ENCODE measurements at regions of chr3 and their contacts with region 1.

Region 1: GRCh38 chr3:48439820-48440589 is at the starts of genes CCDC51 and TMA7:
- DNase-seq: peak; percentile 96 to 99 (median 97)
- H3K4me3 ChIP-seq: peak within 1 kb of the TSS; percentile 93 to 95
- H3K4me3 Mint-ChIP-seq: peak within 1 kb of the TSS; percentile 86 to 99 (median 93)
- H3K27ac ChIP-seq: peak within 1 kb of the TSS; percentile 86
- H3K27ac Mint-ChIP-seq: peak within 1 kb of the TSS; percentile 91 to 100 (median 99)
- H3K4me1 ChIP-seq: peaks cover 32% of the 10 kb centered on the region
- H3K4me1 Mint-ChIP-seq: peaks cover 16 to 40% (median 32%) of the 10 kb centered on the region in 4 donors
- H3K27me3 ChIP-seq: no peaks in the 10 kb centered on the region
- H3K27me3 Mint-ChIP-seq: no peaks in the 10 kb centered on the region
- total RNA-seq, gene CCDC51: 5.1 to 5.4 TPM
- total RNA-seq, gene TMA7: 309 to 310 TPM

Region 2: DNA sequence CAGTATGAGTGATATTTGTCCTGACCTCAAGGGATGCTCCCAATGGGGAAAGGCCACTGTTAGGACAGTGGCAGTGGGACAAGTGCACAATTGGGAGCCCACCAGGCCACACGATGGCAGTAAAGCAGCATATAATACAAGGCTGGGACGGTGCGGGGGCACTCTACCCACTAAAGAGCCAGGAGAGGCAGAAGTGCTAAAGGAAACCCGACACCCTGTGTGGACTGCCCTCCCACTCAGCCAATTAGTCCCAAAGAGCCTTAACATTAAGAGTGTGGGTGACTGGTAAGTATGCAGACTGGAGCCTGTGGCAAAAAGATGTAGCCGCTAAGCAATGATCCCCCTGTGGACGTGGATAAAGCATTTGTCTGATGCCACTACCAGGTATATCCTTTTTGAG is 207.3 kb before region 1 on chr3:
- CTCF ChIA-PET with region 1: interaction called, 35 read pairs
- POLR2A ChIA-PET with region 1: no interaction called
- intact Hi-C with region 1: loop called (anchors 1 kb)
- DNase-seq: peak in 4 of 5 donors; percentile 22 to 42 (median 32)
- H3K4me3 ChIP-seq: no peak overlapping the region
- H3K4me3 Mint-ChIP-seq: no peak overlapping the region
- H3K27ac ChIP-seq: no peak overlapping the region
- H3K27ac Mint-ChIP-seq: no peak overlapping the region
- H3K4me1 ChIP-seq: no peaks in the 10 kb centered on the region
- H3K4me1 Mint-ChIP-seq: peaks cover 0 to 3% (median 0%) of the 10 kb centered on the region in 4 donors
- H3K27me3 ChIP-seq: no peaks in the 10 kb centered on the region
- H3K27me3 Mint-ChIP-seq: peaks cover 0 to 8% of the 10 kb centered on the region in 2 donors

Region 3: GRCh38 chr3:48301020-48301796 is 138.8 kb before region 1 on chr3:
- CTCF ChIA-PET with region 1: interaction called, 14 read pairs
- POLR2A ChIA-PET with region 1: interaction called, 7 read pairs
- intact Hi-C with region 1: loop called (anchors 1 kb)
- DNase-seq: peak; percentile 83 to 89 (median 85)
- H3K4me3 ChIP-seq: peak within 1 kb of the TSS; percentile 86 to 89
- H3K4me3 Mint-ChIP-seq: peak within 1 kb of the TSS; percentile 91 to 96 (median 94)
- H3K27ac ChIP-seq: peak within 1 kb of the TSS; percentile 90
- H3K27ac Mint-ChIP-seq: peak within 1 kb of the TSS; percentile 78 to 99 (median 97)
- H3K4me1 ChIP-seq: peaks cover 20% of the 10 kb centered on the region
- H3K4me1 Mint-ChIP-seq: peaks cover 25 to 57% (median 32%) of the 10 kb centered on the region in 4 donors
- H3K27me3 ChIP-seq: no peaks in the 10 kb centered on the region
- H3K27me3 Mint-ChIP-seq: no peaks in the 10 kb centered on the region

Region 4: DNA sequence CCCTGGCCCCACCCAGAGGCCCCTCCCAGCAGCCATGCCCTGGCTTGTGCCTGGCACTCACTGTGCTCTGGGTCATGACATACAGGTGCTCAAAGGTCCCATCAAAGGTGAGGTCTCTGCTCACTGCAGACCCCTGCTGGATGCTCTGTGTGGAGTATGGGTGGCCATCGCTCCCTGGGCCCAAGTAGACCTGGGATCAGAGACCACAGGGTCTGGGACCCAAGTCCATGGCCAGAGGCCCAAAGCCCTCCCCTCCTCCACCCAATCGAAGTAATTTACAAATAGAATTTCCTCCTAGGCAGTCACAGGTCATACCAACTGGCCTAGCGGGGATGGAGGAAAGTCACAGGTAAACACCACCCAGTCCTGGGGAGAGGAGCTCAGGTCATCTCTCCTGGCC is 17.7 kb before region 1 on chr3:
- CTCF ChIA-PET with region 1: interaction called, 31 read pairs
- POLR2A ChIA-PET with region 1: interaction called, 7 read pairs
- intact Hi-C with region 1: no loop called
- DNase-seq: no peak
- H3K4me3 ChIP-seq: no peak overlapping the region
- H3K4me3 Mint-ChIP-seq: no peak overlapping the region
- H3K27ac ChIP-seq: no peak overlapping the region
- H3K27ac Mint-ChIP-seq: no peak overlapping the region
- H3K4me1 ChIP-seq: no peaks in the 10 kb centered on the region
- H3K4me1 Mint-ChIP-seq: peaks cover 0 to 1% (median 0%) of the 10 kb centered on the region in 4 donors
- H3K27me3 ChIP-seq: no peaks in the 10 kb centered on the region
- H3K27me3 Mint-ChIP-seq: no peaks in the 10 kb centered on the region

Region 5: GRCh38 chr3:48478596-48479555 is 38.9 kb after region 1 on chr3:
- CTCF ChIA-PET with region 1: interaction called, 83 read pairs
- POLR2A ChIA-PET with region 1: interaction called, 56 read pairs
- intact Hi-C with region 1: no loop called
- DNase-seq: peak; percentile 81 to 89 (median 85)
- H3K4me3 ChIP-seq: peak overlapping the region; percentile 71 to 80
- H3K4me3 Mint-ChIP-seq: peak overlapping the region; percentile 89 to 97 (median 90)
- H3K27ac ChIP-seq: peak overlapping the region; percentile 59
- H3K27ac Mint-ChIP-seq: peak overlapping the region; percentile 89 to 99 (median 98)
- H3K4me1 ChIP-seq: peaks cover 58% of the 10 kb centered on the region
- H3K4me1 Mint-ChIP-seq: peaks cover 31 to 59% (median 40%) of the 10 kb centered on the region in 4 donors
- H3K27me3 ChIP-seq: no peaks in the 10 kb centered on the region
- H3K27me3 Mint-ChIP-seq: no peaks in the 10 kb centered on the region

Region 6: GRCh38 chr3:48548729-48549705 is 109.0 kb after region 1 on chr3:
- CTCF ChIA-PET with region 1: interaction called, 118 read pairs
- POLR2A ChIA-PET with region 1: interaction called, 5 read pairs
- intact Hi-C with region 1: loop called (anchors 1 kb)
- DNase-seq: peak; percentile 77 to 82 (median 78)
- H3K4me3 ChIP-seq: no peak overlapping the region
- H3K4me3 Mint-ChIP-seq: no peak overlapping the region
- H3K27ac ChIP-seq: no peak overlapping the region
- H3K27ac Mint-ChIP-seq: peak overlapping the region in 2 of 7 donors; percentile 17 to 35
- H3K4me1 ChIP-seq: peaks cover 8% of the 10 kb centered on the region
- H3K4me1 Mint-ChIP-seq: peaks cover 5 to 21% (median 6%) of the 10 kb centered on the region in 4 donors
- H3K27me3 ChIP-seq: no peaks in the 10 kb centered on the region
- H3K27me3 Mint-ChIP-seq: no peaks in the 10 kb centered on the region